GM10248 (cell line): ENCODE measurements at regions of chr6 and their contacts with region 1.

Region 1: GRCh38 chr6:149513915-149514314 is 29.1 kb upstream of the ZC3H12D start:
- DNase-seq: no peak
- CTCF ChIP-seq: no peak

Region 2: DNA sequence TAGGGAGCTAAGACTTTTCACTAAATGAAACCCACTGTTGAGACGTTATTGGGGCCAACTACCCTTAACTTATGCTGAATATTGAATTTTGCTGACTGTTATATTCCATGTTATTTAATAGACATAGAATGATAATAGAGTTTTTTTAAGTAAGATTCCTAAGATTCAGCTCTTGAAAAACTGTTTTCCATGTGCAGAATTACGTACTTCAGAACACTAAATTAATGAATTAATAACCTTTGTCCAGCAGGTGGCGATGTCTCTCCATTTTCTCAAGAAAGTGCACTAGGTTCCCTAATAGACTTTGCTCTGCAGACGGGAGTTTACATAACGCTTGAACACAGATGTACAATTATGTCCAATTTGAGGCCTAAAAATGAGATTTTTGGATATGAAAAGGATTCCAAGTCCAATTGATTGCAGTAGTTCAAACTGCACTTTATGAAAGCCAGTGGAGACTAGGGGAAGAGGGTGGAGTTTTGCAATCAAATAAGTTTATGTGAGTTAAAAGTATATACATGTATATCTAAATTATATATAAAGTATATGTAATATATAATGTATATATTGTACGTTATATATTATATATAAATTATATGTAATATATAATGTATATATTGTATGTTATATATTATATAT is 485.0 kb before region 1 on chr6:
- CTCF ChIA-PET with region 1: interaction called, 10 read pairs
- POLR2A ChIA-PET with region 1: no interaction called
- DNase-seq: peak; percentile 59
- CTCF ChIP-seq: peak; percentile 54

Region 3: GRCh38 chr6:149445095-149445466 is 68.8 kb before region 1 on chr6:
- CTCF ChIA-PET with region 1: interaction called, 15 read pairs
- POLR2A ChIA-PET with region 1: no interaction called
- DNase-seq: no peak
- CTCF ChIP-seq: no peak

Region 4: GRCh38 chr6:149473080-149474052 is 40.5 kb before region 1 on chr6:
- CTCF ChIA-PET with region 1: interaction called, 37 read pairs
- POLR2A ChIA-PET with region 1: no interaction called
- DNase-seq: no peak
- CTCF ChIP-seq: peak; percentile 20

Region 5: GRCh38 chr6:149484733-149485700 is 28.9 kb before region 1 on chr6 and contains the start of gene ZC3H12D:
- CTCF ChIA-PET with region 1: interaction called, 20 read pairs
- POLR2A ChIA-PET with region 1: interaction called, 3 read pairs
- DNase-seq: no peak
- CTCF ChIP-seq: peak; percentile 39

Region 6: DNA sequence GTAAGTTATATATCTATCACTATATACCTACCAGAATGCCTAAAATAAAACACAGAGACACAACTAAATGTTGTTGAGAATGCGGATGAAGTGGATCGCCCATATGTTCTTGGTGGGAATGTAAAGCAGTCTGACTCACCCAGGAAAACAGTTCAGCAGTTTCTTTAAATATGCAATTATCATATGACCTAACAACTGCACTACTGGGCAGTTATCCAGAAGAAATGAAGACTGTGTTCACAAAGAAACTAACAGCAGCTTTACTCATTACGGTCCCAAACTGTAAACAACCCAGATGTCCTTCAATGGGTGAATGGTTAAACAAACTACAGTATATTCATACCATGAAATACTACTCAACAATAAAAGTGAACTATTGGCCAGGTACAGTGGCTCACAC is 14.8 kb before region 1 on chr6:
- CTCF ChIA-PET with region 1: interaction called, 55 read pairs
- POLR2A ChIA-PET with region 1: no interaction called
- DNase-seq: no peak
- CTCF ChIP-seq: no peak

Region 7: GRCh38 chr6:149529650-149530049 is 15.7 kb after region 1 on chr6:
- CTCF ChIA-PET with region 1: interaction called, 47 read pairs
- POLR2A ChIA-PET with region 1: no interaction called
- DNase-seq: no peak
- CTCF ChIP-seq: no peak